ENCODE measurements at regions of chr19 and their contacts with region 1.

Region 1: GRCh38 chr19:45817010-45817724 is 2.1 kb upstream of the RSPH6A start:
- DNase-seq: peak; percentile 98
- ATAC-seq: peak; percentile 97
- H3K4me3 Mint-ChIP-seq: no peak overlapping the region
- H3K27ac Mint-ChIP-seq: peak overlapping the region; percentile 34
- H3K4me1 Mint-ChIP-seq: peaks cover 6% of the 10 kb centered on the region
- H3K27me3 Mint-ChIP-seq: no peaks in the 10 kb centered on the region

Region 2: GRCh38 chr19:45711851-45712698 is 105.1 kb before region 1 on chr19:
- CTCF ChIA-PET with region 1: no interaction called
- POLR2A ChIA-PET with region 1: no interaction called
- DNase-seq: no peak
- ATAC-seq: no peak
- H3K4me3 Mint-ChIP-seq: no peak overlapping the region
- H3K27ac Mint-ChIP-seq: no peak overlapping the region
- H3K4me1 Mint-ChIP-seq: peaks cover 20% of the 10 kb centered on the region
- H3K27me3 Mint-ChIP-seq: no peaks in the 10 kb centered on the region

Region 3: DNA sequence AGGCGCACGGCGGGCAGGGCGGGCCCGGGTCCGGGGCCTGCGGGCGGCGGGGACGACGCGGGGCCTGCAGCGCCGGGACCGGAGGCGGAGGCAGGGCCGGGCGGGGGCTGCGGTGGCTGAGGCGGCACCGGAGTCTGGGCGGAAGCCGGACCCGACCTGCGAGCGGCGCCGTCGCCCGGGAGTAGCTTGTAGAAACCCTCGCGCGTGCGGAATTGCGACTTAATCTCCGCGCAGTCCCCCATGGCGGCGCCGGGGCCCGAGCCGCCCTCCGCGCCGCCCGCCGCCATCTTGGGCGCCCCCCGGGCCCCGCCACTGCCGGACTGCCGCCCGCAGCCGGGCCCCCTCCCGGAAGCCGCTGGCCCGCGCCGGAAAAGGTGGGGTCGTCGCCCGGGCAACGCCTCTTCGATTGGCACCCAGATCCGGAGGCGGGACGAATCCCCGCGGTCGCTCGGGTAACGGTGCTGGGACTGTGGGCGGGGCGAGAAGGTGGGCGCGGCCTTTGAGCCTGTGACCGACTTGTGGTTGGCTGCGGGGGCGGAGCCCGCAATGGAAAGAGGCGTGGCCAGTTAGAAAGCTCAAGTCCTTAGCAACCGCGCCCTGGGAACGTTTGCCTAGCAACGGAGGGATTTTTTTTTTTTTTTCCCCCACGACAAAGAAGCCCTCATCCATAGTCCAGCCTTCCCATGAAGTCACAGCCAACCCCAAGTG is 24.5 kb before region 1 on chr19 and contains the start of gene DMWD:
- CTCF ChIA-PET with region 1: interaction called, 12 read pairs
- POLR2A ChIA-PET with region 1: no interaction called
- DNase-seq: peak; percentile 100
- ATAC-seq: peak; percentile 85
- H3K4me3 Mint-ChIP-seq: peak within 1 kb of the TSS; percentile 82
- H3K27ac Mint-ChIP-seq: peak within 1 kb of the TSS; percentile 84
- H3K4me1 Mint-ChIP-seq: peaks cover 27% of the 10 kb centered on the region
- H3K27me3 Mint-ChIP-seq: peaks cover 49% of the 10 kb centered on the region
- total RNA-seq, gene DMWD: 20.6 TPM

Region 4: DNA sequence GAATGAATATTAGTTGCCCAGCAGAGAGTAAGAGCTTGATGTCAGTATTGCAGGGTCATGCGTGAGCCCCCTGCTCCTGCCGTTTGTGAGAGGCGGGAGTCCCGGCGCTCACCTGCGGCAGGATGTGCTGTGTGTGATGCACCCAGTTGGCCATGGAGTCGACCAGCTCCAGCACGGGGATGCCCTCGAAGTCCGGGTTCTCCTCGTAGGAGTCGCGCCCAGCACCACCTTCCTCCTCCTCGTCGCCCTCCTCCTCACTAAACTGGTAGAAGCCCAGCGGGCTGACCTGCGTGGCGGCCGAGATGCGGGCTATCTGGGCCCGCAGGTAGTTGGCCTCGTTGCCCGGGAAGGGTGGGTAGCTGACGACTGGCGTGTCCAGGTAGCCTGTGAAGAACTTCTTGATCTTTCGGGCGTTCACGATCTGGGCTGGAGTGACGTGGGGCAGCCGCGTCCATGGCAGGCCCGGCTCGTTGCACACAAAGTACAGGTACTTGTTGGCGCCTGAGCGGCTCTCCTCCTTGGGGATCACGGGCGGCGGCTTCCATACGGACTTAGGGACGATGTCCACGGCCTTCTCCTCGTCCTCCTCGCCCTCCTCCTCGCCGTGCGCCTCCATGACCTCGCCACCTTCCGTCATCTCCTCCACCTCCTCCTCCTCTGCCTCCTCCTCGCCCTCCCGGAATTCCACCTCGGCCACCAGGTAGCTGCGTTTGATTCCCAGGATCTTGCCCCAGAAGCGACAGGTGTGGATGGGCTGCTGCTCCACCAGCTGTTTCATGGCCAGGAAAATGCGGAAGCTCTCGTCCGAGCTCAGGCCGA is 12.8 kb before region 1 on chr19:
- CTCF ChIA-PET with region 1: interaction called, 32 read pairs
- POLR2A ChIA-PET with region 1: interaction called, 4 read pairs
- DNase-seq: no peak
- ATAC-seq: no peak
- H3K4me3 Mint-ChIP-seq: no peak overlapping the region
- H3K27ac Mint-ChIP-seq: no peak overlapping the region
- H3K4me1 Mint-ChIP-seq: peaks cover 2% of the 10 kb centered on the region
- H3K27me3 Mint-ChIP-seq: peaks cover 9% of the 10 kb centered on the region

Region 5: DNA sequence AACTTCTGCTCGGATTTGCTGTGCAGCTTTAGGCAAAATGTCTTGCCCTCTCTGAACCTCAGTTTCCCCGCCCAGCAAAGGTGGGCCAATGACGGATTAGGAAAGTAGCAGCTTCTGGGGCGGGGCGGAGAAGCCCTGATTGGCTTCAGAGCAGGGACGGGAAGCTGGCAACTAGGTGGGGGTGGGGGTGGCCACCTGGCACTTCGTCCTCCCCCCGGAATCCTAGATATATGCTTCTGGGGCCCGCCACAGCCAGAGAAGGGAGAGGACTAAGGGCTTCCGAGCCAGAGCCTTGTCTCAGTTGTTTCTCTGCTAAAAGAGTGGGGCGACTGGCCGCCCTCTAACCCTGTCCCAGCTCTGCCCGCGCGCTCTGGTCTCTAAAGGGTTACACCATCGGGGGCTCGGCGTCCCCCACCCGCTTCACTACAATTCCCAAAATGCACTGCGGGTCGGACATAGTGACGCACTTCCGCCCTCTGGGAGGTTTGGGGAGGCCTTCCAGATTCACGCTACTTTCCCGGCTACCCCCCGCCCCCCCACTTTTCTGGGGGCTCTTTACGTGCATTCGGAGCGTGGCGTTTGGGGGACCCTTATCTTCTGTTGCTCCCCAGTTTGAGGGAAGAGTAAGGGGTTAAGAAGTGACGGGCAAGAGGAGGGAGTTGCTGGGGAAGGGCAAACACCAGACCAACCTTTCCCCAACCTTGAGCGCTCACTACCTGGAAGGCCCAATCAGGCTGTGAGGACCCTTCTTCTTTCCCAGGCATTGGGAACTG is 69.4 kb after region 1 on chr19:
- CTCF ChIA-PET with region 1: interaction called, 16 read pairs
- POLR2A ChIA-PET with region 1: interaction called, 3 read pairs
- DNase-seq: peak; percentile 96
- ATAC-seq: peak; percentile 82
- H3K4me3 Mint-ChIP-seq: peak overlapping the region; percentile 90
- H3K27ac Mint-ChIP-seq: peak overlapping the region; percentile 97
- H3K4me1 Mint-ChIP-seq: peaks cover 29% of the 10 kb centered on the region
- H3K27me3 Mint-ChIP-seq: no peaks in the 10 kb centered on the region

Measured in activated CD8-positive, alpha-beta T cell treated with anti-CD3 and anti-CD28 coated beads, Interleukin-2, amount 10 ng/mL, durations not matched to agents 7 days and 5 days (primary cell).